Motor neuron (in vitro differentiated cells): ENCODE measurements at regions of chr3 and their contacts with region 1.

Region 1: DNA sequence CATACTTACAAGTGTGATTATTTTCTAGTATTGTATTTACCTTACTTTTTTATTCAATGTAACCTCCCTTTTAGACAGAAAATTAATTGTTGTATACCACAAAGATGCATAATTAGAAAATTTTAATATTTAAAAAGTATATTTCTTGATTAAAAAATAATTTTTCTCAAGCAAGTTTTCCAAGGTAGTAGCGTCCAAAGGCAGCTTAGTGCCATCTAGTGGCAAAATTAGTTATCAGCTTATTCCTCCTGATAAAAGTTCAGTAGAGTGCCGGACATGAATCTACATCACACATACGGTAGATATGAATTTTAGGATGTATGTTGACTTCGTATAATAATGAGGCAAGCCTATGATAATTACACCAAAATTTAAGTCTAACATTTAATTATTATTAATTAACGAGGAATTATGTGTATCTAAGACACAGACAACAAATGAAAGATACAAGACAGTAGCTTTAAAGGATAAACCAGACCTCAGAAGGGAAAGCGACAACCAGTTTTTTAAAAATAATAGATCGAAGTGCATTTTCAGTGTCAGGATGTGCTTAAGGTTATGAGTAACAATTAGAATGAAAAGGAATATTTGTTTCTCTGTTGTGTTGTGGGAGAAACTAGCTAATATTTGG is 405.9 kb downstream of the ROBO1 start:
- ATAC-seq: peak in 5 of 8 experiments; percentile 35 to 68 (median 63)
- H3K4me3 ChIP-seq: no peak overlapping the region
- H3K27ac ChIP-seq: no peak overlapping the region
- H3K4me1 ChIP-seq: no peaks in the 10 kb centered on the region

Region 2: DNA sequence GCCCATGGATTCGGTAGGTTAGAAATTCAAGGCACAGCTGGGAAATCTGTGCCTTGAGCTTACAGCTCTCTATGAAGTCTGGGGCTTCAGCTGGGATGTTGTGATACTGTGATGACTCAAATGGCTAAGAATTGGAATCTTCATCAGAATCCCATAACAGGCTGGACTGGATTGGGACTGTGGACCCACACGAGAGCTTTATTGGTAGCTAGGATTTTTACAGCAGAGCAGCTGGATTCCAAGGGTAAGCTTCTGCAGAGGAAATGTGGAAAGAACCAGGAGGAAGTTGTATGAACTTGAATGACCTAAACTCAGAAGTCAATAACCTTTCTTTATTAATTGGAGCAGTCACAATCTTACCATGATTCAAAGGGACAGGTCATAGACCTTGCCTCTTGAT is 781.2 kb before region 1 on chr3:
- in situ Hi-C with region 1: no loop called
- ATAC-seq: peak in 2 of 8 experiments; percentile 75 to 76
- H3K4me3 ChIP-seq: no peak overlapping the region
- H3K27ac ChIP-seq: no peak overlapping the region
- H3K4me1 ChIP-seq: no peaks in the 10 kb centered on the region

Region 3: GRCh38 chr3:79052054-79052681 is 309.7 kb before region 1 on chr3:
- in situ Hi-C with region 1: loop called in 2 of 9 experiments (anchors 25 kb)
- ATAC-seq: no peak
- H3K4me3 ChIP-seq: no peak overlapping the region
- H3K27ac ChIP-seq: no peak overlapping the region
- H3K4me1 ChIP-seq: no peaks in the 10 kb centered on the region

Region 4: DNA sequence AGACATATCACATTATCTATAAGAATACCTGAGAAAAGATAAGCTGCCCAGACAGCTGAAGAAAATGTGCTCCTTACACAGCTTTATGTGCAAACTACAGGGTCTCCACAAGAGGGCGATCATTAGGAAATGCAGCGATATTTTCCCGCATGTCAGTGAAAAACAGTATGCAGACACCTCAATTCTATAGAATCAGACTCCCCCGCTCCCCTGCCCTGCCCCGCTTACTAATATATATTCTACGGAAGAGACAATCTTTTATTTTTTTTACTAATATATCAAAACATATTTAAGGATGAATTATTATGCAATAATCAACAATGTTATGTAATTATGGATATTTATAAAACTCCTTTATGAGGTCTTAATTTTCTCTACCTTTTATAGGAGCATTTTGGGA is 275.3 kb before region 1 on chr3:
- in situ Hi-C with region 1: loop called in 2 of 9 experiments (anchors 25 kb)
- ATAC-seq: peak; percentile 31 to 72 (median 56)
- H3K4me3 ChIP-seq: no peak overlapping the region
- H3K27ac ChIP-seq: no peak overlapping the region
- H3K4me1 ChIP-seq: peaks cover 0 to 4% of the 10 kb centered on the region in 2 donors

Region 5: GRCh38 chr3:80060664-80061063 is 698.8 kb after region 1 on chr3:
- in situ Hi-C with region 1: no loop called
- ATAC-seq: no peak
- H3K4me3 ChIP-seq: no peak overlapping the region
- H3K27ac ChIP-seq: no peak overlapping the region
- H3K4me1 ChIP-seq: peaks cover 0 to under 1% of the 10 kb centered on the region in 2 donors